ENCODE measurements at regions of chr3 and their contacts with region 1.

Region 1: DNA sequence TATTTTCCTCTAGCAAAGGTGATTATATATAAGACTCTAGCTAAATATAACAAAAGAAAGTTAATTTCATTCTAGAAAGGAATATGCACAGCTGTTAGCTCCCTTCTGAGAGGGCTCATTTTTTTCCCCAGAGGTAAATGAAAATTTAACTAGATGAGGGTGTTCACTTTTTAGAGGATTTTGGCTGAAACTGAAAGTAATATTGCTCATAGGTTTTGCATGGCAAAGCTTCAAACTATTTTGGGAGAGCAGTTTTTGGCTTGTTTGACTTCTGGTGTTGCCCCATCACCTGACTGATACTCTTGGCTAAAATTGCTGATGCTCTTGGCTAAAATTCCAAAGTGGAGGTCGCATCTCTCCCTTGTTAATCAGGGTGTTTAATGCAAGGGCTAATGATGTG is 311.9 kb downstream of the EDEM1 start:
- DNase-seq: no peak
- H3K4me3 ChIP-seq: no peak overlapping the region
- H3K27ac ChIP-seq: no peak overlapping the region
- H3K4me1 ChIP-seq: no peaks in the 10 kb centered on the region
- H3K27me3 ChIP-seq: no peaks in the 10 kb centered on the region
- CTCF ChIP-seq: no peak

Region 2: GRCh38 chr3:4633078-4634004 is 866.1 kb before region 1 on chr3:
- CTCF ChIA-PET with region 1: no interaction called
- dilution Hi-C with region 1: no loop called
- in situ Hi-C with region 1: no loop called
- intact Hi-C with region 1: no loop called
- DNase-seq: peak; percentile 35
- H3K4me3 ChIP-seq: no peak overlapping the region
- H3K27ac ChIP-seq: no peak overlapping the region
- H3K4me1 ChIP-seq: no peaks in the 10 kb centered on the region
- H3K27me3 ChIP-seq: no peaks in the 10 kb centered on the region
- CTCF ChIP-seq: peak; percentile 90 to 92

Region 3: GRCh38 chr3:5092018-5092417 is 407.4 kb before region 1 on chr3:
- CTCF ChIA-PET with region 1: no interaction called
- dilution Hi-C with region 1: no loop called
- in situ Hi-C with region 1: no loop called
- intact Hi-C with region 1: no loop called
- DNase-seq: peak; percentile 24
- H3K4me3 ChIP-seq: no peak overlapping the region
- H3K27ac ChIP-seq: no peak overlapping the region
- H3K4me1 ChIP-seq: no peaks in the 10 kb centered on the region
- H3K27me3 ChIP-seq: peaks cover 1% of the 10 kb centered on the region
- CTCF ChIP-seq: no peak

Region 4: GRCh38 chr3:5360453-5360852 is 139.0 kb before region 1 on chr3:
- CTCF ChIA-PET with region 1: no interaction called
- dilution Hi-C with region 1: loop called (anchors 5 kb)
- in situ Hi-C with region 1: no loop called
- intact Hi-C with region 1: no loop called
- DNase-seq: no peak
- H3K4me3 ChIP-seq: no peak overlapping the region
- H3K27ac ChIP-seq: no peak overlapping the region
- H3K4me1 ChIP-seq: no peaks in the 10 kb centered on the region
- H3K27me3 ChIP-seq: no peaks in the 10 kb centered on the region
- CTCF ChIP-seq: no peak

Region 5: GRCh38 chr3:5448816-5449215 is 50.6 kb before region 1 on chr3:
- CTCF ChIA-PET with region 1: no interaction called
- dilution Hi-C with region 1: no loop called
- in situ Hi-C with region 1: no loop called
- intact Hi-C with region 1: no loop called
- DNase-seq: no peak
- H3K4me3 ChIP-seq: no peak overlapping the region
- H3K27ac ChIP-seq: no peak overlapping the region
- H3K4me1 ChIP-seq: no peaks in the 10 kb centered on the region
- H3K27me3 ChIP-seq: no peaks in the 10 kb centered on the region
- CTCF ChIP-seq: no peak

Region 6: DNA sequence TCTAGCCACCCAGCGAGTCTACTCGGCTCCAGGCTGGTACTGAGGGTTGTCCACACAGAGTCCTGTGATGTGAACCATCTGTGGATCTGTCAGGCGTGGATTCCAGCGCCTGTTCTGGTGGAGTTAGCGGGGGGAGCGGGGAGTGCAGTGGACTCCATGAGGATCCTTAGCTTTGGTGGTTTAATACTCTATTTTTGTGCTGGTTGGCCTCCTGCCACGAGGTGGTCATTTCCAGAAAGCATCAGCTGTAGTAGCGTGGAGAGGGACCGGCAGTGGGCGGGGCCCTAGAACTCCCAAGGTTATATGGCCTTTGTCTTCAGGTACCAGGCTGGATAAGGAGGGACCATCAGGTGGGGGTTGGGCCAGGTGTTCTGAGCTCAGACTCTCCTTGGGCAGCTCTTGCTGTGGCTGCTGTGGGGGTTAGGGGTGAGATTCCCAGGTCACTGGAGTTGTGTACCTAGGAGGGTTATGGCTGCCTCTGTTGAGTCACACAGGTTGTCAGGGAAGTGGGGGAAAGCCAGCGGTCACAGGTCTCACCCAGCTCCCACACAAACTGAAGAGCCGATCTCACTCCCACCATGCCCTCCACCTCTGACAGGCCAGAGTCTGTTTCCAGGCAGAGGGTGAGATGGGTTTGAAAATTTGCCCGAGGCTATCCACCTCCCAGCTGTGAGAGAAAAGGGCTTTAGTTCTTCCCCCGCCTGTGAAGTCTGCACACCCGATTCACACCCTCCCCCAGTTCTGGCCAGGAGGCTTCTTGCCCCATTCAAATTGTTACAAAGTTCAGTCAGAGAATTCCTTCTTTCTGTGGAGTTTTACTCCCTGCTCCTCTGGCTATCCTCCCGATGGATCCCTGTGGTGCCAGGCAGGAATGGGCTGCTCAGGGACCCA is 134.8 kb after region 1 on chr3:
- CTCF ChIA-PET with region 1: no interaction called
- dilution Hi-C with region 1: no loop called
- in situ Hi-C with region 1: no loop called
- intact Hi-C with region 1: no loop called
- DNase-seq: no peak
- H3K4me3 ChIP-seq: no peak overlapping the region
- H3K27ac ChIP-seq: no peak overlapping the region
- H3K4me1 ChIP-seq: no peaks in the 10 kb centered on the region
- H3K27me3 ChIP-seq: no peaks in the 10 kb centered on the region
- CTCF ChIP-seq: no peak

Measured in mammary epithelial cell (primary cell).